ENCODE measurements at regions of chr4 and their contacts with region 1.

Region 1: GRCh38 chr4:53205970-53206369 is 159.9 kb downstream of the SCFD2 start:
- DNase-seq: no peak
- H3K4me3 ChIP-seq: no peak overlapping the region
- H3K27ac ChIP-seq: no peak overlapping the region
- H3K4me1 ChIP-seq: no peaks in the 10 kb centered on the region
- H3K27me3 ChIP-seq: no peaks in the 10 kb centered on the region
- CTCF ChIP-seq: no peak

Region 2: DNA sequence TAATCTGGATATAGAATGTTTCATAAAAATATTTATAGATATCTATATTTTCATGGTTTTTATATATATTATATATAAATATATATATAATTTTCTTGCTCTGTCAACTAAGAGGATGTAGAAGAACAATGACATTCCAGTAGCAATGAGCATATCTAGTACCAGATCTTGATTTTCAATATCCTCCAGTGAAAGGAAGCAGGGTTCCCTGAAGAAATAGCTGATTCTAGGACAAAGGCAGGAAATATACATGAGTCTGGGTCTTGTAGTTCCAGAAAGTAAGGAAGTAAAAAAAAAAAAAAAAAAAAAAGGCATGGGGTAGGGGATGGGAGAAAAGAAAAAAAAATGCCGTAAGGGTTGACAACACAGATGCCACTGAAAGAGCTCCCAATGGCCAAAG is 102.5 kb before region 1 on chr4:
- CTCF ChIA-PET with region 1: no interaction called
- dilution Hi-C with region 1: no loop called
- in situ Hi-C with region 1: no loop called
- intact Hi-C with region 1: no loop called
- DNase-seq: no peak
- H3K4me3 ChIP-seq: no peak overlapping the region
- H3K27ac ChIP-seq: no peak overlapping the region
- H3K4me1 ChIP-seq: peaks cover 26% of the 10 kb centered on the region
- H3K27me3 ChIP-seq: no peaks in the 10 kb centered on the region
- CTCF ChIP-seq: no peak

Region 3: DNA sequence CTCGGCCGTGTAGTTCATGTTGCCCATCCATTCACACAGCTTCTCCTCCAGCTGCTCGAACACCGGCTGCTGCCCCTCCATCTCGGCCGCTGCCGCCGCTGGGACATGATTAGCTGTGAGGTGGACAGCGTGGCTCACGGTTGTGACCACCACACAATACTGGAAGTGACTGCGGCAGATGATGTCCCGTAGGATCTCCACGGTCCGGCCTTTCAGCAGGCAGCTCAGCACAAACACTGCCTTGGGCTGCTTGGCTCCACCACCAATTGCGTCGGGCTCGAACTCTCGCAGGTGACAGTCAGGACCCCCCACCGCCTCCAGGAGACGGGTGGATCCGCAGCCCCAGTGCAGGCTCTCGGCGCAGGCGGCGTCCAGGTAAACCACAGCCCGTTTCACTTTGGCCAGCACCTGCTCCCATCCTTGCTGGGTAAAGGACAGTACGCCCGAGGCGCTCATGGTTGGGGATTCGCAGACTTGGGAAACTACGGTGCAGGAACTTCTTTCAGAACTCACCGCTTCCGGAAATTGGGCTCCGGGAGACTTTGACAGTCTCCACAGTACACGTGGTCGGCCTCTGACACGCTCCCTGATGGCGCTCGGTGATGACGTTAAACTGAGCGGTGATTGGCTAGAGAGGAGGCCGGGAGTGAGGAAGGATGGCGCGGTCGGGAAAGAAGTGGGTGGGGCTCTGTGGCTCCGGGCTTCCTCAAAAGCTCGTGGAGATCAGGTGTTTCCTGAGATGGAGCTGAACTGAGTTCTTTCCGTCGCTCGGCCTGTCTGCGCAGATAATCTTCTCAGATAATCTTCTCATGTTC is 159.7 kb after region 1 on chr4 and contains the start of gene SCFD2:
- CTCF ChIA-PET with region 1: no interaction called
- dilution Hi-C with region 1: no loop called
- in situ Hi-C with region 1: loop called in 1 of 2 experiments (anchors 25 kb)
- intact Hi-C with region 1: no loop called
- DNase-seq: peak; percentile 98
- H3K4me3 ChIP-seq: peak within 1 kb of the TSS; percentile 68 to 94 (median 87)
- H3K27ac ChIP-seq: no peak within 1 kb of the TSS
- H3K4me1 ChIP-seq: peaks cover 4% of the 10 kb centered on the region
- H3K27me3 ChIP-seq: no peaks in the 10 kb centered on the region
- CTCF ChIP-seq: no peak
- total RNA-seq, gene SCFD2: 14.4 to 21.5 TPM

Measured in mammary epithelial cell (primary cell).